ENCODE measurements at regions of chr1 and their contacts with region 1.

Region 1: DNA sequence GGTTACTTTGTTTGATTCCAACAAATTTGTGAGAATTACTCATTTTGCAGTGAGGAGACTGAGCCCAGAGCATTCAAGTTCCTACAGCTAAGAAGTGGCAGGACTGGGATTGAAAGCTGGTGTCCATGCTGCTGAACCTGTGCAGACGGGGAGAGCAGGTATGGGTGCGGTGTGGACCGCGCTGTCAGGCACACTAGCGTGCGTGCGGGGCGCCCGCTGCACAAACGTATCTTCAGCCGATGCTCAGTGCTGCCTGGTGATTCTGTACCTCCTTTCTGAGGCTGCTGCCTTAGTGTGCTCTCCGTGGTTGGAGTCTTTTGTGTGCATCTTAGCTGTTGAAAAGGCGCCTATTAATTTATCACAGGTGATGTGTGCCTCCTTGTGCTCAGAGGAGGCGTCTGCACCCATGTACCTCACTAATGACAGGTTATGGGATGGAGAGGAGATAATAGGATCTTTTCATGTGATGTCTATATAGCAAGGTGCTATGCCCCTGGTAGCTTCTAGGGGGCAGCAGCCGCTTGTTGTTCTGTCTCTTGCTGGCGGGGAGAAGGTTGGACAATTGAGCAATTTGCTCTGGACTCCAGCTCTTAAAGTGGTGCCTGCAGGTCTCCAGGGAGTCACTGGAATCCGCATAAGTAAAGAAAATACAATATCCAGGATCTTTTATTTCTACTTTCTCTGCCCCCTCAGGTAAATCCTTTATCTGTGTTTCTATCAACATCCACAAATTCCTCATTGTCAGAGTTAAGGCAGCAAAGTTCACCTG is 32.5 kb downstream of the PEX14 start:
- DNase-seq: peak; percentile 74
- ATAC-seq: peak; percentile 46
- H3K4me3 Mint-ChIP-seq: no peak overlapping the region
- H3K27ac Mint-ChIP-seq: peak overlapping the region; percentile 15
- H3K4me1 Mint-ChIP-seq: peaks cover 54% of the 10 kb centered on the region
- H3K27me3 Mint-ChIP-seq: no peaks in the 10 kb centered on the region

Region 2: DNA sequence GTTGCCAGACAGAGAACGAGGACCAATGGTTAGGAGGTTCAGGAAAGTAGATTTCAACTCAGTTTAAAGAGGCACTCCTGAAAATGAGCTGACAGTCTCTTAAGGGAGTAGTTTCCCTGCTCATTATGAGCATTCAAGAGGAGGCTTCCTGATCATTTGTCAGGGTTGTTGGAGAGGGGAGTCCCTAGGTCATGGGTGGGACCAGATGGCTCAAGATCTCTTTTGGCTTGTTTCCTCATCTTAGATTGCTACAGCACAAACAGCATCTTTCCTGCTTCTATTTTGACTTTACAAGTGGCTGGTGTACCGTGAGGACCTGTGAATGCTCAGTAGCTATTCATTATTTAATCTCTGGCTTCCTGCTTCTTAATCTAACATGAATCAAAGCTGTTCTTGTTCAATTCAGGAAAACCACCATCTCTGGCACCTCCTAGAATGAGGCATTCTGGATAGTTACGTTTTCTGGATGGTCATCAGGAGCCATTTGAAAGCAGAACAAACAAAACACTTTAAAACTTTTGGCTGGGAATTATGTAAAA is 15.1 kb after region 1 on chr1:
- CTCF ChIA-PET with region 1: interaction called, 70 read pairs
- POLR2A ChIA-PET with region 1: interaction called, 10 read pairs
- DNase-seq: no peak
- ATAC-seq: no peak
- H3K4me3 Mint-ChIP-seq: no peak overlapping the region
- H3K27ac Mint-ChIP-seq: no peak overlapping the region
- H3K4me1 Mint-ChIP-seq: peaks cover 36% of the 10 kb centered on the region
- H3K27me3 Mint-ChIP-seq: no peaks in the 10 kb centered on the region

Region 3: GRCh38 chr1:10646347-10646861 is 139.1 kb after region 1 on chr1:
- CTCF ChIA-PET with region 1: no interaction called
- POLR2A ChIA-PET with region 1: no interaction called
- DNase-seq: no peak
- ATAC-seq: no peak
- H3K4me3 Mint-ChIP-seq: no peak overlapping the region
- H3K27ac Mint-ChIP-seq: no peak overlapping the region
- H3K4me1 Mint-ChIP-seq: no peaks in the 10 kb centered on the region
- H3K27me3 Mint-ChIP-seq: no peaks in the 10 kb centered on the region

Region 4: DNA sequence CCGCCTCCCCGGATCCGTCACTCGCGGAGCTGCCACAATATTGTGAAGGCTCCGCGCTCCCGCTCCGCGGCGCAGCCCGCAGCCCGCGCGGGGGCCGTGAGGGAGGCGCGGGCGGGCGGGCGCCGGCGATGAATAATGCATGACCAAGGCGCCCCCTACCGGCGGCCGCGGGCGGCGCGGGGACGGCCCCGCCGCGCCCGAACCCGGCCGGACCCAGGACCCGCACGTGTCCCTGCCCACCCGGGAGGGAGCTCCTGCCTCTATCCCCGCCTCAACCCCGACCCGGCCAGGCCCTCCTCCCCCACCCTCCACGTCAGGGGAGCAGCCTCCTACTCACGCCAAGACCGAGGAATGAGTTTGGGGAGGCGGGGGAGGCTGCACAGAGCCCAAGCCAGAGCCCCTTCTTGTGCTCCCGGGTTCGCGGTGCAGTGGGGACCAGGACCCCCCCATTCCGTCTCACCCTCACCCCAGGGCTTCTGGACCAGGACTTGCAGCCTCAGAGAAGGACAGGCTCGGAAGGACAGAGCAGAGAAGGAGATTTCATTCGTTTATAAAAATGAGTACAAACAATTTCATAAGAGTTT is 359.9 kb after region 1 on chr1:
- CTCF ChIA-PET with region 1: interaction called, 15 read pairs
- POLR2A ChIA-PET with region 1: no interaction called
- DNase-seq: peak; percentile 63
- ATAC-seq: peak; percentile 90
- H3K4me3 Mint-ChIP-seq: no peak overlapping the region
- H3K27ac Mint-ChIP-seq: no peak overlapping the region
- H3K4me1 Mint-ChIP-seq: peaks cover 13% of the 10 kb centered on the region
- H3K27me3 Mint-ChIP-seq: peaks cover 61% of the 10 kb centered on the region